ENCODE measurements at regions of chrX and their contacts with region 1.

Region 1: GRCh38 chrX:132092439-132093065 is 35.3 kb downstream of the FRMD7 start:
- H3K4me3 ChIP-seq: no peak overlapping the region
- H3K27ac ChIP-seq: no peak overlapping the region
- H3K4me1 ChIP-seq: no peaks in the 10 kb centered on the region
- CTCF ChIP-seq: 0 out of 2 replicates have a peak, but pooled peaks have one; percentile 49

Region 2: DNA sequence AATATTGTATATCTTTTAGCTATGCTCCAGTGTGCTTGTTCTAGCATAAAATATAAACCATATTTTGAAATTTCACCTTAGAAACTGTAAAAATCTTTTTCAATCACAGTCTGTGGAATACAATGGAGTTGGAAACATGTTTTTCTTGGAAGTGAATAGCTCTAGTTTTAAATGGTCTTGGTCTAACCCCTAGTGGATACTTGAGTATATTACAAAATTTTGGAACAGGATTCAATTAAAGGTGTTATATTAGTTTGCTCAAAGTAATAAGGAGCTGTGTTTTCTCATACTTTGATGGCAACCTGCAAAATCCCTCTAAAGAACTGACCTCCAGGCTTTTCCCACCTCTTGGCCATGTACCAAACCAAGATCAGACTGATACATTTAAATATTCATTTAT is 21.3 kb before region 1 on chrX:
- CTCF ChIA-PET with region 1: interaction called, 35 read pairs
- POLR2A ChIA-PET with region 1: no interaction called
- H3K4me3 ChIP-seq: no peak overlapping the region
- H3K27ac ChIP-seq: no peak overlapping the region
- H3K4me1 ChIP-seq: no peaks in the 10 kb centered on the region
- CTCF ChIP-seq: no peak

Region 3: GRCh38 chrX:132077414-132077813 is 15.1 kb before region 1 on chrX:
- CTCF ChIA-PET with region 1: interaction called, 35 read pairs
- POLR2A ChIA-PET with region 1: no interaction called
- H3K4me3 ChIP-seq: no peak overlapping the region
- H3K27ac ChIP-seq: no peak overlapping the region
- H3K4me1 ChIP-seq: no peaks in the 10 kb centered on the region
- CTCF ChIP-seq: no peak

Region 4: DNA sequence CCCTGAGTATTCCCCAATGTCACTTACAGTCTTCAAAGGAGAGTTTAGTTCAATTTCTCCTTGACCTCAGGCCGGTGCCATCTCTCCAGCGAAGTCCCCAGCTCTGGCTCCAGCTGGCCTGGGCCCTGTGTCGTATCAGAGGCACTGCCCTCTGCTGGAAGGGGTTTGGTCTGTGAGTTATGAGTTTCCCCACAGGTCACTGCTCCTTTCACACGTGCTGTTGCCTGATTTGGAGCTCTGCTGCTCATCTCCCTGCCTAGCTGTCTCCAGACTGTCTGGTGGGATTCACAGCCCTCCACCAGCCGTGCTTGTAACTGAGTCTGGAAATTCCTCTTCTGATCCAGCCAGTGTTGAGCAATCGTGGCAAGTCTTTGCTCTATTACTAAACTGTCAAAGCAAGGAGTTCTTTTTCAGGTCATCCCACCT is 126.8 kb after region 1 on chrX and contains the start of gene RAP2C:
- CTCF ChIA-PET with region 1: interaction called, 31 read pairs
- POLR2A ChIA-PET with region 1: interaction called, 3 read pairs
- H3K4me3 ChIP-seq: peak within 1 kb of the TSS; percentile 70
- H3K27ac ChIP-seq: peak within 1 kb of the TSS; percentile 95
- H3K4me1 ChIP-seq: peaks cover 3% of the 10 kb centered on the region; the same call in 1 of the 2 replicates
- CTCF ChIP-seq: peak; percentile 78